ENCODE measurements at regions of chr19 and their contacts with region 1.

Region 1: DNA sequence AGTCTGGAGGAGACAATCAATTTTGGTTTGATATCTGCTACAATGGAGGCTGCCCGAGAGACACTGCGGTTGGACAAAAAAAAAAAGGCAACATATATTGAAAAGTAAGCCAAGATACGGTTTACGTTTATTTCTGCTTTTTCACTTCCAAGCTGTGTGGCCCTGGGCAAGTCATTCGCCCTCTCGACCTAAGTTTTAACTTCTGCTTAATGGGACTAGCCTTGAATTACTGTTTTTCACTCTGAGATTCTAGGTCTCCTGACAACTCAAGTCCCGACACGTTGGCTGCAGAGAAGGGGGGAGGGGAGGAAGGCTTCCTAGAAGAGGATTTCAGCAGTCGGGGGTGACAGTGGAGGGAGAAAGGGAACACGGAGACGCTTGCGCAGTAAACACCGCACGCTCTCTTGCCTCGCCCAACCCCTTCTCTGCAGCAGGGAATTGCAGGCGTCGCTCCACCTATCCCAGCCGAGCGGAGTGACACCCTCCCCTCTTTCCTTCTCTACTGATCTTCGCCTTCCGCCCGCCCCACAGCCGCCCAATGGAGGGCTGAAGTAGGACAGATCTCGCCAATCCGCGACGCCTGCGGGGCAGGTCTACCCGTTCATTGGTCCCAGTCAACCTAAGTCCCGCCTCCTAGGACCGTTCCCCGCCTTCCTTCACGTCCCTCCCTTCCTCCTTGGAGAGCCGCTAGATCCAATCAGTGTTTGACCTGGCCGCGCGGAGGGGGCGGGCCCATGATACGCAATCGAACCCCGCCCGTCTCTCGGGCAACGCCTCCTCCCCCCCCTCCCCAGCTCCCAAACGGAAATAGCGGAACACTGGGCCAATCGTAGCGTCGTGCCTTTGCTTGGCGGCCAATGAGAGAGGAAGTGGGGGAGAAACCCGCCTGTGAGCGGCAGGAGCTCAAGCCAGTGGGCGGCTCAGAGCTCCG is 529 bp upstream of the AP2A1 start:
- DNase-seq: peak; percentile 93
- ATAC-seq: peak; percentile 87
- H3K4me3 Mint-ChIP-seq: peak overlapping the region; percentile 88
- H3K27ac Mint-ChIP-seq: peak overlapping the region; percentile 96
- H3K4me1 Mint-ChIP-seq: peaks cover 33% of the 10 kb centered on the region
- H3K27me3 Mint-ChIP-seq: no peaks in the 10 kb centered on the region
- CTCF ChIP-seq: no peak

Region 2: GRCh38 chr19:48568345-48568886 is 1197.9 kb before region 1 on chr19:
- CTCF ChIA-PET with region 1: no interaction called
- POLR2A ChIA-PET with region 1: no interaction called
- intact Hi-C with region 1: no loop called
- DNase-seq: no peak
- ATAC-seq: no peak
- H3K4me3 Mint-ChIP-seq: no peak overlapping the region
- H3K27ac Mint-ChIP-seq: no peak overlapping the region
- H3K4me1 Mint-ChIP-seq: peaks cover 2% of the 10 kb centered on the region
- H3K27me3 Mint-ChIP-seq: peaks cover 9% of the 10 kb centered on the region
- CTCF ChIP-seq: no peak

Region 3: DNA sequence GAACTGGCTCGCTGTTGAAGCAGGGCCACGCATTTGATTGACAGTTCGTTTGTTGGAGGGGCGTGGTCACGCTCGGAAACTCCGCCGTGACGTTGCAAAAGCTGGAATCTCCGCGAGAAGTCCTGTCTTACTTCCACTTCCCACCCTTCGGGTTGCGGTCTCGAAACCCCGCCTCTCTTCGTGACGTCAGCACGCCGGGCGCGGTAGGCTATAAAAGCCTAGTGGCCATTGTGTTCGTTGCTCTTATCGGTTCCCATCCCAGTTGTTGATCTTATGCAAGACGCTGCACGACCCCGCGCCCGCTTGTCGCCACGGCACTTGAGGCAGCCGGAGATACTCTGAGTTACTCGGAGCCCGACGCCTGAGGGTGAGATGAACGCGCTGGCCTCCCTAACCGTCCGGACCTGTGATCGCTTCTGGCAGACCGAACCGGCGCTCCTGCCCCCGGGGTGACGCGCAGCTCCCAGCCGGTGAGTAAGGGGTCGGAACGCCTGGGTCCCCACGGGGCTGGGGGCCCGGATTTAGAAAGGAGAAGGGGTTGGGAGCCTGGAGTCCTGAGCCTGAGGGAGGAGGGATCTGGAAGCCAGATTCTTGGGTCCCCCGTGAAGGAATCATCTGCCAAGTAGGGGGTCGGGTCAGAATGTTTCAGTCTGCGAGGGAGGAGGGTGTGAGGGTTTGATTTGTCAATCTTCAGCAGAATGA is 893.9 kb before region 1 on chr19 and contains the start of gene PPP1R15A:
- CTCF ChIA-PET with region 1: no interaction called
- POLR2A ChIA-PET with region 1: no interaction called
- intact Hi-C with region 1: loop called (anchors 2 kb)
- DNase-seq: peak; percentile 99
- ATAC-seq: peak; percentile 35
- H3K4me3 Mint-ChIP-seq: peak within 1 kb of the TSS; percentile 100
- H3K27ac Mint-ChIP-seq: peak within 1 kb of the TSS; percentile 100
- H3K4me1 Mint-ChIP-seq: peaks cover 42% of the 10 kb centered on the region
- H3K27me3 Mint-ChIP-seq: no peaks in the 10 kb centered on the region
- CTCF ChIP-seq: no peak
- total RNA-seq, gene PPP1R15A: 115 and 123 TPM in 2 replicates

Region 4: DNA sequence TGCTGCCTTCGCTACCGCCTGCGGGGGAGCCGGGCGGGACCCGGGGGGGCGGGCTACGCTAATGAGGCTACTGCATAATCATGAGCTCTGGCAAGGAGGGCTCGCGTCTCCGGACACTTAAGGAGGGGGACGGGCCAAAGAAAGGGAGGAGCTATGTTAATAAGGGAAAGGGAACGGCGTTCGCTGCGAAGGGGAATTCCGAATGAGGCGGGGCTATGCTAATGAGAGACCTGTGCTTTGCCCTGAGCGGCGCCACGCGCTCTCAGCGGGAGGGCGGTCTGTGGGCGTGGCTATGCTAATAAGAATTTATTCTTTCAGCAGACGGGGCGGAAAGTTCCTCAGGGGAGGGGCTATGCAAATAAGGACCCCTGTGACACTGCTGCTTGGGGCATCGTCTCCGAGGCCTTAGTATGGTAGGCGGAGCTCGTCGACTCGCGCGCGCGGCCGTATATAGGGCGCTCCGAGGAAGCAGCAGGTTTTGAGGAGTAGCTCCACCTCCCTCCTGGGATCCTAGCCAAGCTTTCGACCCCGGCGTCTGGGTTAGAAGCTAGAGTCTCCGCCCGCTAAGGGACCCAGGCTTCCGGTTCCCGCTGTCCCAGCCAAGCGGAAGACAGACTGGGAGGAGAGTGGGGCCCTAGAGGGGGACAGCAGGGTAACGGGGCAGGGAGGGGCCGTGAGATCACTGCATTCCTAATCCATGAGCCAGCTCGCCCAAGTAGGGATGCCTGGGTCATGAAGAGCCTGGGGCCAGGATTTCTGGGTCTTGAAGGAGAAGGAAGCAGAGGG is 126.0 kb before region 1 on chr19 and contains the start of gene RRAS:
- CTCF ChIA-PET with region 1: no interaction called
- POLR2A ChIA-PET with region 1: interaction called, 5 read pairs
- intact Hi-C with region 1: loop called (anchors 1 kb)
- DNase-seq: peak; percentile 97
- ATAC-seq: peak; percentile 69
- H3K4me3 Mint-ChIP-seq: peak within 1 kb of the TSS; percentile 93
- H3K27ac Mint-ChIP-seq: peak within 1 kb of the TSS; percentile 96
- H3K4me1 Mint-ChIP-seq: peaks cover 59% of the 10 kb centered on the region
- H3K27me3 Mint-ChIP-seq: no peaks in the 10 kb centered on the region
- CTCF ChIP-seq: no peak
- total RNA-seq, gene RRAS: 4.8 and 5.1 TPM in 2 replicates

Region 5: GRCh38 chr19:49808711-49809159 is 42.5 kb after region 1 on chr19:
- CTCF ChIA-PET with region 1: no interaction called
- POLR2A ChIA-PET with region 1: interaction called, 15 read pairs
- intact Hi-C with region 1: loop called (anchors 1 kb)
- DNase-seq: peak; percentile 88
- ATAC-seq: peak; percentile 56
- H3K4me3 Mint-ChIP-seq: peak overlapping the region; percentile 91
- H3K27ac Mint-ChIP-seq: peak overlapping the region; percentile 74
- H3K4me1 Mint-ChIP-seq: peaks cover 49% of the 10 kb centered on the region
- H3K27me3 Mint-ChIP-seq: no peaks in the 10 kb centered on the region
- CTCF ChIP-seq: no peak

Region 6: GRCh38 chr19:49823472-49823871 is 57.2 kb after region 1 on chr19:
- CTCF ChIA-PET with region 1: no interaction called
- POLR2A ChIA-PET with region 1: no interaction called
- intact Hi-C with region 1: no loop called
- DNase-seq: no peak
- ATAC-seq: no peak
- H3K4me3 Mint-ChIP-seq: no peak overlapping the region
- H3K27ac Mint-ChIP-seq: no peak overlapping the region
- H3K4me1 Mint-ChIP-seq: peaks cover 29% of the 10 kb centered on the region
- H3K27me3 Mint-ChIP-seq: no peaks in the 10 kb centered on the region
- CTCF ChIP-seq: no peak

Region 7: DNA sequence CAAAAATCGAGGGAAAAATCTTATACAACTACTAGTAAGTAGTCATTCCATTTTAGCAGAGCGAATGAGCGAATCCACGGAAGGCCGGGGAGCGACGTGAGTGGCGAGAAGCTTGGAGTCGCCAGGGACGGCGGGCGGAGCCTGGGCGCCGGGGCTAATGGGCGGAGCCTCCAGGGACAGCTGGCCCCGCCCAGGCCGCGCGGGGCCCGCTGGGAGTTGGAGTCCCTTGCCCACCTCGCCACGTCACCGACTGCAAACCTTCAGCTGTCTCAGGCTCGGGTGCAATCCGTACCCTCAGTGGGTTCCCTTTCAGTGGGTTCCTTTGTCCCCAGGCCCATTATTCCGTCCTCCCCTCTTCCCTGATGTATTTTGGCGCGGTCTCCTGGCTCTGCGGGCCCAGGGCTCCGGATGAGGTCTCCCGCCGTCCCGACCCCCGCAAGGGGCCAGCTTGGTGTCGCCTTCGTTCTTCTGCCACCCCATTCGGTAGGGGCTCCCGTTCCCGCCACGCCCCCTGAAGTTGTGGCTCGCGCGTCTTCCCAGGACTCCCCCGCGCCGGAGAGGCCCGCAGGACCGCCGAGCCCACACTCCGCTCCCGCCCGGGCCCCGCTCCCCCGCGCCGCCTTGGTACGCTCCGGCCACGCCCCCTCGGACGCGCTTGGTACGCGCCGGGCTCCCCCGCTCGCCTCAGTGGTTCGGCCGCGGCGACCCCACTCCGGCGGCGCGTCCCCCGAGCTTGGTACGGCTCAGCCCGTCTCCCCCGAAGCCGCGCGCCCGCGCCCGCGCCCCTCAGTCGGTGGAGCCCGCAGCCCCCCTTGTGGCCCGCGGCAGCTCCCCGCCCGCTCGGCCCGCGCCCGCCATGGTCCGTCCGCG is 84.4 kb after region 1 on chr19 and contains the start of gene PTOV1:
- CTCF ChIA-PET with region 1: no interaction called
- POLR2A ChIA-PET with region 1: interaction called, 10 read pairs
- intact Hi-C with region 1: loop called (anchors 1 kb)
- DNase-seq: peak; percentile 96
- ATAC-seq: peak; percentile 84
- H3K4me3 Mint-ChIP-seq: peak within 1 kb of the TSS; percentile 92
- H3K27ac Mint-ChIP-seq: peak within 1 kb of the TSS; percentile 95
- H3K4me1 Mint-ChIP-seq: peaks cover 56% of the 10 kb centered on the region
- H3K27me3 Mint-ChIP-seq: no peaks in the 10 kb centered on the region
- CTCF ChIP-seq: no peak
- total RNA-seq, gene PTOV1: 103 and 107 TPM in 2 replicates

Region 8: GRCh38 chr19:49889687-49890348 is 123.5 kb after region 1 on chr19:
- CTCF ChIA-PET with region 1: no interaction called
- POLR2A ChIA-PET with region 1: interaction called, 5 read pairs
- intact Hi-C with region 1: loop called (anchors 1 kb)
- DNase-seq: no peak
- ATAC-seq: peak; percentile 66
- H3K4me3 Mint-ChIP-seq: peak overlapping the region; percentile 82
- H3K27ac Mint-ChIP-seq: peak overlapping the region; percentile 7
- H3K4me1 Mint-ChIP-seq: peaks cover 41% of the 10 kb centered on the region
- H3K27me3 Mint-ChIP-seq: no peaks in the 10 kb centered on the region
- CTCF ChIP-seq: peak; percentile 39

Region 9: GRCh38 chr19:50025024-50025789 is 258.9 kb after region 1 on chr19 and contains the start of gene VRK3:
- CTCF ChIA-PET with region 1: no interaction called
- POLR2A ChIA-PET with region 1: no interaction called
- intact Hi-C with region 1: loop called (anchors 1 kb)
- DNase-seq: peak; percentile 95
- ATAC-seq: peak; percentile 87
- H3K4me3 Mint-ChIP-seq: peak within 1 kb of the TSS; percentile 97
- H3K27ac Mint-ChIP-seq: peak within 1 kb of the TSS; percentile 100
- H3K4me1 Mint-ChIP-seq: peaks cover 46% of the 10 kb centered on the region
- H3K27me3 Mint-ChIP-seq: no peaks in the 10 kb centered on the region
- CTCF ChIP-seq: no peak
- total RNA-seq, gene VRK3: 71.1 and 82.6 TPM in 2 replicates

Measured in activated B cell treated with CpG ODN at 0.5 μM for 24 hours (primary cell).